ENCODE measurements at regions of chr1 and their contacts with region 1.

Region 1: GRCh38 chr1:247390116-247390791 is 25.7 kb upstream of the NLRP3 start:
- DNase-seq: peak; percentile 85
- H3K4me3 Mint-ChIP-seq: peak overlapping the region; percentile 64
- H3K27ac Mint-ChIP-seq: peak overlapping the region; percentile 75
- H3K4me1 Mint-ChIP-seq: peaks cover 22% of the 10 kb centered on the region
- H3K27me3 Mint-ChIP-seq: peaks cover 17% of the 10 kb centered on the region

Region 2: DNA sequence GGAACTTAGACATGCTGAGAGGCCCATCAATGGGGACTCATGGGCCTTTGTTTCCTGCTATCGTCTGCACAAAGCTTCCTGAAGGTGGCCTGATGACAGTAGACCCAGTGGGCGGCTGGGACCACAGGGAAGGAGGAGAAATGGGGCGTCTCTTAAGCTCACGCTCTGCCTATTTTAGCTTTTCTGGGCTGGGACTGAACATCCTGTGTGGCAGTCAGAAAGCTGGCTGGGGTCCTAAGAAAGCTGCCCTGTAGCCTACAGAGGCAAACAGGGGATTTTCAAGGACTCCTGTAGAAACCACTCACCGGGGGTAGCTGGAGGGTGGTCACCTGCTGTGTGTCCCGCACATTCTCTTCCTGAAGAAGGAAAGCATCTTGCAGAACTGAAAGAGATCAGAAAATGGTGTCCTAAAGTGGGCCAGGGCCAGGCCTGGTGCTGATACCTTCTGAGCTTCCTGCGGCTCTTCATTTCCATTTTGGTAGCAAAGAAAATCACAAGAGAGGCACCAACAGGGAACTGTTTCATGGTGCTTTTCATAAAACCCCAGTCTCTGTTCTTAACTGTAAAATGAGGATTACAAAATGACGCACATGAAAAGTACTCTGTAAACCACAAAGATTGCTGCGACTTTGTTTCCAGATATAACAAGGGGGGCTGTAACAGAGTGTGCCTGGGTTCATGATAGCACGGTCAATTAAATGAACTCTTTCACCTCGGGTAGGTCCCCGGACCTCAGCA is 67.2 kb before region 1 on chr1:
- CTCF ChIA-PET with region 1: interaction called, 11 read pairs
- POLR2A ChIA-PET with region 1: no interaction called
- DNase-seq: no peak
- H3K4me3 Mint-ChIP-seq: no peak overlapping the region
- H3K27ac Mint-ChIP-seq: no peak overlapping the region
- H3K4me1 Mint-ChIP-seq: peaks cover 11% of the 10 kb centered on the region
- H3K27me3 Mint-ChIP-seq: no peaks in the 10 kb centered on the region

Region 3: GRCh38 chr1:247373721-247374141 is 16.5 kb before region 1 on chr1:
- CTCF ChIA-PET with region 1: interaction called, 46 read pairs
- POLR2A ChIA-PET with region 1: no interaction called
- DNase-seq: peak; percentile 51
- H3K4me3 Mint-ChIP-seq: no peak overlapping the region
- H3K27ac Mint-ChIP-seq: no peak overlapping the region
- H3K4me1 Mint-ChIP-seq: peaks cover 5% of the 10 kb centered on the region
- H3K27me3 Mint-ChIP-seq: peaks cover 17% of the 10 kb centered on the region

Region 4: GRCh38 chr1:247401310-247402119 is 11.3 kb after region 1 on chr1:
- CTCF ChIA-PET with region 1: interaction called, 10 read pairs
- POLR2A ChIA-PET with region 1: no interaction called
- DNase-seq: no peak
- H3K4me3 Mint-ChIP-seq: no peak overlapping the region
- H3K27ac Mint-ChIP-seq: no peak overlapping the region
- H3K4me1 Mint-ChIP-seq: peaks cover 2% of the 10 kb centered on the region
- H3K27me3 Mint-ChIP-seq: peaks cover 54% of the 10 kb centered on the region

Region 5: GRCh38 chr1:247448107-247448791 is 58.0 kb after region 1 on chr1:
- CTCF ChIA-PET with region 1: interaction called, 10 read pairs
- POLR2A ChIA-PET with region 1: no interaction called
- DNase-seq: peak; percentile 25
- H3K4me3 Mint-ChIP-seq: no peak overlapping the region
- H3K27ac Mint-ChIP-seq: no peak overlapping the region
- H3K4me1 Mint-ChIP-seq: no peaks in the 10 kb centered on the region
- H3K27me3 Mint-ChIP-seq: no peaks in the 10 kb centered on the region

Region 6: DNA sequence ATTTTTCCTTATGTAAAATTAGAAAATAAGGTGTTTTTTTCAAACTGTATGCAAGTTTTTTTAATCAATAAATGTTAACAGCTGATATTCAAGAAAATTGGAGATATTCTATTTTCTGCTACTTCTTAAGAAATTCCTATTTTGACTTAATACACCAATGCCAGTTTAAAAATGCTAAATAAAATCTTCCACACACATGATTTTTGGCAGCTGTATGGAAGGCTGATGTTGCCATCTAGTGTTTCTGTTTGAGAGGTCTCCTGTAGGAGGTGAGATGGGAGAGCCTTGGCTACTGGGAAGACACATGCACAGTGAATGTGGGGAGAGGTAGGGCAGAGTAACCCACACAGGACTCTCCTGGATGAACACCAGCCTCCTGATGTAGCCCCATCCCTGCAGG is 96.8 kb after region 1 on chr1:
- CTCF ChIA-PET with region 1: interaction called, 23 read pairs
- POLR2A ChIA-PET with region 1: no interaction called
- DNase-seq: peak; percentile 23
- H3K4me3 Mint-ChIP-seq: no peak overlapping the region
- H3K27ac Mint-ChIP-seq: no peak overlapping the region
- H3K4me1 Mint-ChIP-seq: no peaks in the 10 kb centered on the region
- H3K27me3 Mint-ChIP-seq: peaks cover 8% of the 10 kb centered on the region